ENCODE measurements at regions of chr14 and their contacts with region 1.

Region 1: DNA sequence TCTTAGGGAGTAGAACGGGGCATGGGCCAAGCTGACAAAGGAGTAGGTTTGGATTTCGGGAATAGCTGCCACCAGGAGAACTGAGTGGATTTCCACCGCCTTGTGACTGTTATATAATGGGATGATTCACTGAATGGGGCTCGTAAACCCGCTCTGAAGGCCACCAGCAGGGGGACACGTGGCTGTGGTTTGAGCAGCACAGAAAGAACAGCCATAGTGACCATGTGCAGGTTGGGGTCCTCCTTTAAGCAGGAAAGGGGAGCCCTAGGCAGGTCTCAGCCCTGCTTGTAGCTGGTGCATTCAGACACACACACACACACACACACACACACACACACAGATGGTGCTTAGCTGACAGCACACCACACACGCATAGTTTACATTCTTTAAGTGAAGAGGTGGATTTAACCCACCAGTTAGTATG is 8.6 kb upstream of the ASB2 start:
- DNase-seq: no peak
- CTCF ChIP-seq: no peak

Region 2: DNA sequence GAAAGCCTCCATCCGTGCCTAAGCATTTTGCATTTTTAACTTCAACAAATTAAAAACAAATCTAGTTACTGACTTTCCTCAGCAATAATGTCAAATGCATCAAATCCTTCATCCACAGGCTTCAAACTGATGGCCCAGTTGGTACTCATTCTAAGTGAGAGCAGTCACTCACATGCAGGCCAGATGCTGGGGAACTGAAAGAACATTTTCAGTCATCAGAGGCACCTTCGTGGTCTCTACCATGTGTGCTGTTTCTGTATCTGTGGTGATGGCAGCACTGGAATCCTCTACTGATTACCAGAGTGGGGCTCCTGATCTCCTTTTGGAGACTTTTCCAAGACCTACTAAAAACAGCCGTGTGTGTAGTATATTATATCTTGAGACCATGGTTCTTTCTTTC is 341.9 kb before region 1 on chr14:
- in situ Hi-C with region 1: no loop called
- DNase-seq: no peak
- CTCF ChIP-seq: no peak

Region 3: GRCh38 chr14:95140060-95140858 is 1155.3 kb after region 1 on chr14:
- in situ Hi-C with region 1: loop called (anchors 25 kb)
- DNase-seq: no peak
- CTCF ChIP-seq: no peak